CD8-positive, alpha-beta T cell (primary cell): ENCODE measurements at regions of chr21 and their contacts with region 1.

Region 1: DNA sequence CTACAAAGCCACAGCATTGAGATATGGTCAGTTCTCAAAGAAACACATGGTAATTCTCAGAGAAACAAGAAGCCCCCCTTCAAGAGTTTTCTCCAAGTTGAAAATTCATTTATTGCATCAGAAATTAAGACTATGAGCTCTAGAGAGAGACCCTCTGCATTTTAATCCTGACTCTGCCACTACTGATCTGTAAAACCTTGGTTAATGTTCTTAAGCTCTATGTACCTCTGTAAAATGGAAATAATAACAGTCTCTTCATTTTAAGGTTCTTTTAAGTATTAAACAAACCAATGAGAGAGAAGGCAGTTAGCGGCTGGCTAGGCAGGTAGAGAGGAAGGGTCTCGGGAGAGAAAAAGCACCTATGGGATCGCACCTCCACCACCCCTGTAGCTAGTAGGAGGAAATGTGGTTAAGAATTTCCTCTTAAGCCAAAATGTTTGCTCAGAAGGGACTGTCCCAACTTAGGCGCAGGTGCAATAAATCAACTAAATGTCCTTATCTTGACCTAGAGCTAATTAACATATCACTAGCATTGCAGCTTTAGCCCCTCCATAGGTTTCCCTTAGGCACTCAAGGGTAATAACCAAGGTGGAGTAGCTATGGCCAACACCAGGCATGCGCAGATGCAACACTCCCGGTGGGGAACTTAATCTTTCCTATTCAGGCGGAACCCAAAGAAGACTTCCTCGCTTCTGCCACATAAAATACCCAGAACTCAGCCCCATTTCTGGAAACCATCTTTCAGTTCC is 1685.4 kb downstream of the MRPL39 start:
- DNase-seq: peak in 2 of 9 experiments; percentile 1 to 20
- ATAC-seq: no peak
- H3K4me3 ChIP-seq: no peak overlapping the region
- H3K4me3 Mint-ChIP-seq: no peak overlapping the region
- H3K27ac ChIP-seq: no peak overlapping the region
- H3K27ac Mint-ChIP-seq: no peak overlapping the region
- H3K4me1 ChIP-seq: peaks cover 12% of the 10 kb centered on the region
- H3K4me1 Mint-ChIP-seq: peaks cover 21% of the 10 kb centered on the region
- H3K27me3 ChIP-seq: no peaks in the 10 kb centered on the region
- H3K27me3 Mint-ChIP-seq: no peaks in the 10 kb centered on the region
- CTCF ChIP-seq: no peak

Region 2: DNA sequence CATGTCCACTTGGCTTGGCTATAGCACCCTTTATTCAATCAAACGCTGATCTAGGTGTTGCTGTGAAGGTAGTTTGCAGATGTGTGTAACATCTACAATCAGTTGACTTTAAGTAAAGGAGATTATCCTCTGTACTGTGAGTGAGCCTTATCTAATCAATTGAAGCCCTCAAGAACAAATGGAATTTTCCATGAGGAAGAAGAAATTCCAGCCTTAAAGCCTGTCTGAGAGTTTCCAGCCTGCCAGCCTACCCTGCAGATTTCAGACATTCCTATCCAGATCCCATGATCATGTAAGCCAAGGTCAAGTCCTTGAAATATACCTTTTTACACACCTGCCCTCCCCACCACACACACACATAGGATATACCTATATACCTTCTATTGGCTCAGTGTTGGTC is 988.7 kb after region 1 on chr21:
- CTCF ChIA-PET with region 1: no interaction called
- POLR2A ChIA-PET with region 1: no interaction called
- intact Hi-C with region 1: loop called in 1 of 2 experiments (anchors 5 kb)
- DNase-seq: no peak
- ATAC-seq: no peak
- H3K4me3 ChIP-seq: no peak overlapping the region
- H3K4me3 Mint-ChIP-seq: no peak overlapping the region
- H3K27ac ChIP-seq: no peak overlapping the region
- H3K27ac Mint-ChIP-seq: no peak overlapping the region
- H3K4me1 ChIP-seq: no peaks in the 10 kb centered on the region
- H3K4me1 Mint-ChIP-seq: no peaks in the 10 kb centered on the region
- H3K27me3 ChIP-seq: no peaks in the 10 kb centered on the region
- H3K27me3 Mint-ChIP-seq: no peaks in the 10 kb centered on the region
- CTCF ChIP-seq: no peak